Activated T-helper 1 cell treated with anti-CD3 and anti-CD28 coated beads, Interleukin-12 subunit alpha, Interleukin-12 subunit beta, Interleukin-2, Interleukin-4 antibody, amounts not matched to agents 30 ng/mL and 10 ng/mL and 1 ng/mL, durations not matched to agents 14 hours and 24 hours and 36 hours (primary cell): ENCODE measurements at regions of chr7 and their contacts with region 1.

Region 1: GRCh38 chr7:22672846-22673652 is 54.0 kb upstream of the IL6 start:
- DNase-seq: no peak
- H3K4me3 Mint-ChIP-seq: peak overlapping the region; percentile 6
- H3K27ac Mint-ChIP-seq: no peak overlapping the region
- H3K4me1 Mint-ChIP-seq: peaks cover 66% of the 10 kb centered on the region
- H3K27me3 Mint-ChIP-seq: peaks cover 3% of the 10 kb centered on the region

Region 2: GRCh38 chr7:21945454-21946227 is 727.4 kb before region 1 on chr7 and contains the start of gene CDCA7L:
- intact Hi-C with region 1: loop called (anchors 10 kb)
- DNase-seq: peak; percentile 54
- H3K4me3 Mint-ChIP-seq: peak within 1 kb of the TSS; percentile 94
- H3K27ac Mint-ChIP-seq: peak within 1 kb of the TSS; percentile 95
- H3K4me1 Mint-ChIP-seq: peaks cover 69% of the 10 kb centered on the region
- H3K27me3 Mint-ChIP-seq: peaks cover 16% of the 10 kb centered on the region
- total RNA-seq, gene CDCA7L: 102 and 113 TPM in 2 replicates

Region 3: GRCh38 chr7:22278660-22279059 is 394.4 kb before region 1 on chr7:
- intact Hi-C with region 1: no loop called
- DNase-seq: no peak
- H3K4me3 Mint-ChIP-seq: no peak overlapping the region
- H3K27ac Mint-ChIP-seq: no peak overlapping the region
- H3K4me1 Mint-ChIP-seq: no peaks in the 10 kb centered on the region
- H3K27me3 Mint-ChIP-seq: peaks cover 6% of the 10 kb centered on the region

Region 4: DNA sequence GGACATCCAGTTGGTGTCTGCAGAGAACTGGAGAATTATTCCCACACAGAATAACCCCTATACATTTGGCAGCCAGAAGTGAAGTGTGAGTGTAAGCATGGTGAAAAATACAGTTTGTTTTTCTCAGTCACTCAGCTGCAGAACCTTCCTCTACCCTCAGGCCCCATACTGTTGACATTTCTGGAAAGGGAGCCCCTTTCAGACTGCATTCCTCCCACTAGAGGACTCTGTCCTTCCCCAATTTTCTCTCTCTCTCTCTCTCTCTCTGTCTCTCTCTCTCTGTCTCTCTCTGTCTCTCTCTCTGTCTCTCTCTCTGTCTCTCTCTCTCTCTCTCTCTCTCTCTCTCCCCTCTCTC is 86.3 kb before region 1 on chr7:
- intact Hi-C with region 1: loop called (anchors 1 kb)
- DNase-seq: no peak
- H3K4me3 Mint-ChIP-seq: no peak overlapping the region
- H3K27ac Mint-ChIP-seq: no peak overlapping the region
- H3K4me1 Mint-ChIP-seq: peaks cover 9% of the 10 kb centered on the region
- H3K27me3 Mint-ChIP-seq: peaks cover 43% of the 10 kb centered on the region

Region 5: GRCh38 chr7:22697876-22698606 is 25.0 kb after region 1 on chr7:
- intact Hi-C with region 1: loop called (anchors 1 kb)
- DNase-seq: peak; percentile 26
- H3K4me3 Mint-ChIP-seq: peak overlapping the region; percentile 57
- H3K27ac Mint-ChIP-seq: peak overlapping the region; percentile 79
- H3K4me1 Mint-ChIP-seq: peaks cover 74% of the 10 kb centered on the region
- H3K27me3 Mint-ChIP-seq: peaks cover 3% of the 10 kb centered on the region